Posterior vena cava (tissue), 2 donors: ENCODE measurements at regions of chr9 and their contacts with region 1.

Region 1: DNA sequence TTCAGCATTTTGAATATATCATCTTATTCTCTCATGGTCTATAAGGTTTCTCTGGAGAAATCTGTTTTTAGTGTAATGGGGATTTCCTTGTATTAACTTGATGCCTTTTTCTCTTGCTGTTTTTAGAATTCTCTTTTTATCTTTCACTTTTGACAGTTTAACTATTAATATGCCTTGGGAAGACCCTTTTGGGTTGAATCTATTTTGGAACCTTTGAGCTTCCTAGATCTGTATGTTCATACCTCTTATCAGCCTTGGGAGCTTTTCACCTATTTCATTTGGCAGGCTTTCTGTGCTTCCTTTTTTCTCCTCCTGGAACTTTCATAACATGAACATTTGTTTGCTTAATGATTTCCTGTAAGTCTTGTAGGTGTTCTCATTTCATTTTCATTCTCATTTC is 22.2 kb downstream of the RCL1 start:
- DNase-seq: no peak

Region 2: DNA sequence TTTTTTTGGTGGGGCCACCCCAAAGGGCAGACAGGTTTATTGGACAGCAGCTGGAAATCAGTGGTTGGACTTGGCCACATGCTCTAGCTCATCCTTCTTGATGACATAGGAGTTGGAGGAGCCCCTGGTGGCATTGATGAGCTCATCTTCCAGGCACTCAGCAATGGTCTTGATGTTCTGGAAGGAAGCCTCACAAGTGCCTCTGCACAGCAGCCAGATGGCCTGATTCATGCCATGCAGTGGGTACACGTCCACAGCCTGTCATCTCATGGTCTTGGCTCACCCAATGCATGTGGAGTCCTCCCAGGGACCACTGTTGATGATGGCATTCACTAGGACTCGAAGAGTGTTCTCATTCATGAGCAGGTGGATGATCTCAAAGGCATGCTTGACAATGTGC is 33.5 kb before region 1 on chr9:
- intact Hi-C with region 1: loop called in 1 of 2 experiments (anchors 5 kb)
- DNase-seq: no peak